ENCODE measurements at regions of chr14 and their contacts with region 1.

Region 1: DNA sequence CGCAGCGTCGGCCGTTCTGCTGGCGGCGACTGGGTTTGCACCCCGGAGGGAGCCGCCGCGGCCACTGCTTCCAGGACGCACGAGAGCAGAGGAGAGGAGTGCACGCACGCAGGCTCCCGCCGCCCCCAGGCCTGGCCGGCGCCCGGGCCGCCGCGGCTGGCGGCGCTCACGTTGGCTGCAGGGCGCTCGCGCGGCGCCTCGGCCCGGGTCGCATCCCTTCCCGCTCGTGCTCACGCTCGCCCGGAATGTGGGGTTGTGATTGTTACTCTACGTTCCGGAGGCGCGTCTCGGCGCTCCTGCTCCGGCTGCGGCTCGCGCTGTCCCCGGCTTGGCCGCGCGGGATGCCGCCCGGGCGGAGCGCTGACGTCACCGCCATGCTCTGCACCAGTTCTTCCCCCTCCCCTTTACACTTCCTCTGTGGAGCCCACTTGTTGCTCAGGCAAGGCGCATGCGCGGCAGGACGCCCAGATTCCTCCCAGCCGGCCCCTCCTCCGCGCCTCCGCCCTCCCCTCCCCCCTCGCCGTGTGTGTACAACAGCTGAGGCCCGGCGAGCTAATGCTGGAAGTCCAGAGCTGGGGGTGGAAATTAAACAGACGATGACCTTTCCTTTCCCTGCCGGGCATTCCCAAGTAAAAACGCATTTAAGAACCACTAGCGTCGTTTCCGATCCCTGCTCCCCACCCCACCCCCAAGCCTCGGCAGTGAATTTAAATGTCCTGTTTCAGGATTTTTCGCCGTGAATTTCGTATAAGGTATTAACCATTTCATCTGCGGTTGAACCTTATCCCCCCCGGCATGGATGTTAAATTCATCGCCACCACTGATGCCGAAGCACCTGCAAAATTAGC is at the start of gene IRF2BPL:
- DNase-seq: peak; percentile 90 to 96 (median 94)
- ATAC-seq: peak; percentile 82
- H3K4me3 ChIP-seq: peak within 1 kb of the TSS; percentile 81
- H3K4me3 Mint-ChIP-seq: peak within 1 kb of the TSS; percentile 93 to 99 (median 98)
- H3K27ac ChIP-seq: peak within 1 kb of the TSS; percentile 98
- H3K27ac Mint-ChIP-seq: peak within 1 kb of the TSS; percentile 97 to 100 (median 99)
- H3K4me1 ChIP-seq: peaks cover 43 to 57% of the 10 kb centered on the region in 2 donors
- H3K4me1 Mint-ChIP-seq: peaks cover 33 to 65% (median 58%) of the 10 kb centered on the region in 7 donors
- H3K27me3 ChIP-seq: no peaks in the 10 kb centered on the region
- H3K27me3 Mint-ChIP-seq: no peaks in the 10 kb centered on the region
- total RNA-seq, gene IRF2BPL: 30.2 to 45.2 (median 34.6) TPM

Region 2: DNA sequence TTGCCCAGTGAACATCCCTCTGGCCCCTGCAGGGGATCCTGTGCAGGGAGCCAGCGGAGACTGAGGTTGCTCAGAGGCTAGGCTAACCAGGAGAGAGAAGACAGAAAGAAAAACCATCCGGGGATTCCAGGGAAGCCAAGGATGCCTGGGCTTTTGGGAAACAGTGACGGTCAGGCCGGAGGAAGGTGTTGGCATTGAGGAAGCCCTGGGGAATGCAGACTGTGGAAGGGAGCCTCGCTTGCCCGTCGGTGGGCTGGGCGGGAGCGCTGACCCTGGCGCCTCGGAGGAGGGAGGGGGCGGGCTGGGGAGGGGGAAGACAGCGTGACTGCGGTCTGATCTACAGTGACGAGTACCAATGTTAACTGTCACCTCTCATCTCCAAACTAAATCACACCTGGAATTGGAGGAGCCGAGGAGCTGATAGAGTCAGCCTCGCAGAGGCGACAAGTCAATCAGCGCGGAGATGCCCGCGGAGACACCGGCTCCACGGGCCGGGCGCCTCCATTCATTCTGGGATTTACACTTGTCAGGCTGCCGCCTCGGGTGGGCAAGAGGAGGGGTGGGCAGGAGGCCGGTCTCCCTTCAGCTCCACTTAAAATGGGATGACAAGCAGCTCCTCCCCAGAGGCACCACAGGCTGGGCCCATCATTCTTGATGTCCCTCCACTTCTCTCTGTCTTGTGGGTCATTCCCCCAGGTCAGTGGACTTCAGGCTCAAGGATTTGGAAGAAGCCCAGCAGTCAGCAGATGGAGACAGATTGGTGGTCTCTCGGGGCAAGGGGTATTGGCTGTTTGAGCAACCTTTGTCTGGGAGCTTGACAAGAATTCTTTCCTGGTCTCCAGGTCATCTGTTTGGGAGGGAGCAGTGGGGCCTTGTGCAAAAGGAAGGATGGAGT is 897.3 kb before region 1 on chr14:
- CTCF ChIA-PET with region 1: no interaction called
- POLR2A ChIA-PET with region 1: no interaction called
- intact Hi-C with region 1: no loop called
- DNase-seq: no peak
- ATAC-seq: no peak
- H3K4me3 ChIP-seq: no peak overlapping the region
- H3K4me3 Mint-ChIP-seq: no peak overlapping the region
- H3K27ac ChIP-seq: no peak overlapping the region
- H3K27ac Mint-ChIP-seq: no peak overlapping the region
- H3K4me1 ChIP-seq: no peaks in the 10 kb centered on the region
- H3K4me1 Mint-ChIP-seq: peaks cover 0 to 6% (median 3%) of the 10 kb centered on the region in 7 donors
- H3K27me3 ChIP-seq: no peaks in the 10 kb centered on the region
- H3K27me3 Mint-ChIP-seq: peaks cover 43 to 88% (median 79%) of the 10 kb centered on the region in 5 donors

Region 3: GRCh38 chr14:76918751-76919543 is 109.7 kb before region 1 on chr14:
- CTCF ChIA-PET with region 1: interaction called, 12 read pairs
- POLR2A ChIA-PET with region 1: interaction called, 19 read pairs
- intact Hi-C with region 1: no loop called
- DNase-seq: no peak
- ATAC-seq: no peak
- H3K4me3 ChIP-seq: no peak overlapping the region
- H3K4me3 Mint-ChIP-seq: peak overlapping the region in 6 of 10 donors; percentile 27 to 67 (median 56)
- H3K27ac ChIP-seq: no peak overlapping the region
- H3K27ac Mint-ChIP-seq: peak overlapping the region in 2 of 9 donors; percentile 25 to 40
- H3K4me1 ChIP-seq: peaks cover 0 to 27% of the 10 kb centered on the region in 2 donors
- H3K4me1 Mint-ChIP-seq: peaks cover 12 to 65% (median 55%) of the 10 kb centered on the region in 7 donors
- H3K27me3 ChIP-seq: no peaks in the 10 kb centered on the region
- H3K27me3 Mint-ChIP-seq: peaks cover 0 to 1% (median 0%) of the 10 kb centered on the region in 5 donors

Region 4: DNA sequence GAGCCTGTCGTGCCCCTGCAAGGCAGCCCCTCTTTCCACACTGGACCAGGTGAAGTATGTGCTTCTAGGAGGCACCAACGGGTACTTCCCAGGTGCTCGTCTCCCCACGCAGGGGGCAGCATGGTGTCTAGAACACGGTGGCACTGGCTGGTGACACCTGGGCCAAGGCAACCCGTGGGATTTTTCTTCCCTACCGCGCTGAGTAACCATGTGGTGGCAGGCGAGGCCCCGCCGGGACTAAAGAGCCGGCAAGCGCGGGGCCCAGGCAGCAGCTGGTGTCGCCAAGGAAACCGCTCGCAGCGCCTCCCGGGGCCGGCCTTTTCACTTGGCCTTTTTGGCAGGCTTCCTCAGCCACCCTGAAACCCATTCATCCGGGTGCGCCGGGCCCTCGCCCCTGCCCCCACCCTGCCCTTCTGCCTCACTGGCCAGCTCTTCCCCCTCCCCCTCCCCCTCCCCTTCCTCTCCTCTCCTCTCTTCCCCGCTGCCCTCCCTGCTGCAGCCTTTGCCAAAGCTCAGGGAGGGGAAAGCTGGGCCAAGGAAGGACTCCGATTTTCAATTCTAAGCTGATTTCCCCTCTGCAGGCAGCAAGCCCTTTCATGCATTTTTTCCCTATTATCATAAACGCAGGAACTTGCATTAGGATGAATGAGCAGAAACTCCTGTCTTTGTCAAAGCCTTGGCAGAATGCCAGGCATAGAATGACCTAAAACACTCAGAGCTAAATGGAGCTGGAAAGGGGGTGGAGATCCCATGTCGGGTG is 81.3 kb before region 1 on chr14:
- CTCF ChIA-PET with region 1: interaction called, 14 read pairs
- POLR2A ChIA-PET with region 1: interaction called, 73 read pairs
- intact Hi-C with region 1: loop called in 1 of 2 experiments (anchors 1 kb)
- DNase-seq: peak; percentile 53 to 76 (median 68)
- ATAC-seq: peak; percentile 96
- H3K4me3 ChIP-seq: no peak overlapping the region
- H3K4me3 Mint-ChIP-seq: peak overlapping the region in 9 of 10 donors; percentile 20 to 65 (median 50)
- H3K27ac ChIP-seq: peak overlapping the region; percentile 20
- H3K27ac Mint-ChIP-seq: peak overlapping the region in 7 of 9 donors; percentile 28 to 83 (median 63)
- H3K4me1 ChIP-seq: peaks cover 6 to 16% of the 10 kb centered on the region in 2 donors
- H3K4me1 Mint-ChIP-seq: peaks cover 20 to 56% (median 35%) of the 10 kb centered on the region in 7 donors
- H3K27me3 ChIP-seq: no peaks in the 10 kb centered on the region
- H3K27me3 Mint-ChIP-seq: no peaks in the 10 kb centered on the region

Region 5: DNA sequence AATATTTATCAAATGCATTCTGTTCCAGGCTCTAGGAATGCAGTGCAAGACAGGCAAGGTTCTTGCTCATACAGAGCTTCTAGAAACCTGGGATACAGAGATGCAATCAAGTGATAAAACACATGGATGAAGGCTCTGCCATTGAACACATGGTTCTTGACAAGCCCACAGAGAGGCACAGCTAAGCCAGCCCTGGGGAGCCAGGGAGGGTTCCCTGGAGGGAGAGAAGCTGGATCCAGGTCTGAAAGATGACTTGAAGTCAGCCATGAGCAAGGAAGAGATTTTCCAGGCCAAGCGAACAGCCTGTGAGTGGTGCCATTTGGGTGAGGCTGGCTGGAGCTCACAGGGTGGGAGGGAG is 66.3 kb before region 1 on chr14:
- CTCF ChIA-PET with region 1: interaction called, 17 read pairs
- POLR2A ChIA-PET with region 1: interaction called, 40 read pairs
- intact Hi-C with region 1: loop called (anchors 1 kb)
- DNase-seq: no peak
- ATAC-seq: no peak
- H3K4me3 ChIP-seq: peak overlapping the region; percentile 82
- H3K4me3 Mint-ChIP-seq: peak overlapping the region; percentile 74 to 86 (median 84)
- H3K27ac ChIP-seq: peak overlapping the region; percentile 87
- H3K27ac Mint-ChIP-seq: peak overlapping the region; percentile 87 to 99 (median 91)
- H3K4me1 ChIP-seq: peaks cover 39 to 59% of the 10 kb centered on the region in 2 donors
- H3K4me1 Mint-ChIP-seq: peaks cover 41 to 89% (median 79%) of the 10 kb centered on the region in 7 donors
- H3K27me3 ChIP-seq: no peaks in the 10 kb centered on the region
- H3K27me3 Mint-ChIP-seq: peaks cover 0 to 8% (median 0%) of the 10 kb centered on the region in 5 donors

Region 6: GRCh38 chr14:77017666-77018065 is 10.9 kb before region 1 on chr14:
- CTCF ChIA-PET with region 1: interaction called, 3 read pairs
- POLR2A ChIA-PET with region 1: interaction called, 10 read pairs
- intact Hi-C with region 1: no loop called
- DNase-seq: no peak
- ATAC-seq: no peak
- H3K4me3 ChIP-seq: no peak overlapping the region
- H3K4me3 Mint-ChIP-seq: no peak overlapping the region
- H3K27ac ChIP-seq: no peak overlapping the region
- H3K27ac Mint-ChIP-seq: no peak overlapping the region
- H3K4me1 ChIP-seq: no peaks in the 10 kb centered on the region
- H3K4me1 Mint-ChIP-seq: peaks cover under 1 to 14% (median 6%) of the 10 kb centered on the region in 7 donors
- H3K27me3 ChIP-seq: no peaks in the 10 kb centered on the region
- H3K27me3 Mint-ChIP-seq: no peaks in the 10 kb centered on the region

Region 7: GRCh38 chr14:77376771-77377501 is 348.3 kb after region 1 on chr14 and contains the starts of genes SAMD15 and TMED8:
- CTCF ChIA-PET with region 1: no interaction called
- POLR2A ChIA-PET with region 1: no interaction called
- intact Hi-C with region 1: loop called in 1 of 2 experiments (anchors 1 kb)
- DNase-seq: peak; percentile 77 to 88 (median 83)
- ATAC-seq: peak; percentile 96
- H3K4me3 ChIP-seq: peak within 1 kb of the TSS; percentile 99
- H3K4me3 Mint-ChIP-seq: peak within 1 kb of the TSS in 7 of 10 donors; percentile 88 to 97 (median 93)
- H3K27ac ChIP-seq: peak within 1 kb of the TSS; percentile 87
- H3K27ac Mint-ChIP-seq: peak within 1 kb of the TSS; percentile 52 to 93 (median 77)
- H3K4me1 ChIP-seq: peaks cover 14 to 18% of the 10 kb centered on the region in 2 donors
- H3K4me1 Mint-ChIP-seq: peaks cover 17 to 41% (median 39%) of the 10 kb centered on the region in 7 donors
- H3K27me3 ChIP-seq: no peaks in the 10 kb centered on the region
- H3K27me3 Mint-ChIP-seq: peaks cover 0 to 10% (median 0%) of the 10 kb centered on the region in 5 donors
- total RNA-seq, gene SAMD15: 0.27 to 0.46 (median 0.42) TPM in 3 of 5 experiments, not detected in the others
- total RNA-seq, gene TMED8: 5.5 to 18.6 (median 7.0) TPM